ENCODE measurements at regions of chr16 and their contacts with region 1.

Region 1: GRCh38 chr16:8855011-8855786 is 13.6 kb downstream of the CARHSP1 start:
- H3K4me3 ChIP-seq: no peak overlapping the region
- H3K27ac ChIP-seq: no peak overlapping the region
- H3K4me1 ChIP-seq: no peaks in the 10 kb centered on the region
- CTCF ChIP-seq: 0 out of 2 replicates have a peak, but pooled peaks have one; percentile 24

Region 2: GRCh38 chr16:8868416-8869211 is 13.4 kb after region 1 on chr16 and contains the start of gene CARHSP1:
- CTCF ChIA-PET with region 1: interaction called, 5 read pairs
- POLR2A ChIA-PET with region 1: interaction called, 21 read pairs
- H3K4me3 ChIP-seq: peak within 1 kb of the TSS; percentile 75
- H3K27ac ChIP-seq: peak within 1 kb of the TSS; percentile 90
- H3K4me1 ChIP-seq: peaks cover 11% of the 10 kb centered on the region
- CTCF ChIP-seq: no peak

Measured in HEK293 (cell line).